ENCODE measurements at regions of chr1 and their contacts with region 1.

Region 1: DNA sequence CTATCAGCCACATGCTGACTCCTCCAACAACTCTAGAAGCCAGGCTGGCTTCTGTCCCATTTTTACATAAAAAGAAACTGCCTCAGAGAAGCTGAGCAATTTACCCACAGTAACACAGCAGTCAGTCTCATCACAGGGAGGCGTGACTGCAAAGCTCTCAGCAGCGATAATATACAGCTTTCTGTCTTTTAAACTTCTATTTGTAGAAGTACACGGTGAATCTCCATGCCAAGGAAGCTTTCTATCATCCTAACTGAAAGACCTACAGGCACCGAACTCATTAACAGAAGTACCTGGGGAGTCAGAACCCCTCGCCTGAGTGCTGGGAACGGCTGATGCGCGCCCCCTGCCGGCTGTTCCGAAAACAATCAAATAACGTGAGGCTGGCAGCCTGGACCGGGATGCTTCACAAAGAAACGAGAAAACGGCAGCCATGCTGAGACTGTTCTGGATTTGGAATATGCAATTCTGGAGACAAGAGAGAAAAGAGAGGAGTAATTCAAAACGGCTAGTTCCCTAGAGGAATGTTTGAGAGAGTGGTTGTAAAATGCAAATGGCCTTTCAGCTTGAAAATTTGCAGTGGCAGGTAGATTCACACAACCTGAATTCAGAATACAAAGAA is 43.5 kb upstream of the RAB4A start:
- DNase-seq: peak; percentile 92

Region 2: DNA sequence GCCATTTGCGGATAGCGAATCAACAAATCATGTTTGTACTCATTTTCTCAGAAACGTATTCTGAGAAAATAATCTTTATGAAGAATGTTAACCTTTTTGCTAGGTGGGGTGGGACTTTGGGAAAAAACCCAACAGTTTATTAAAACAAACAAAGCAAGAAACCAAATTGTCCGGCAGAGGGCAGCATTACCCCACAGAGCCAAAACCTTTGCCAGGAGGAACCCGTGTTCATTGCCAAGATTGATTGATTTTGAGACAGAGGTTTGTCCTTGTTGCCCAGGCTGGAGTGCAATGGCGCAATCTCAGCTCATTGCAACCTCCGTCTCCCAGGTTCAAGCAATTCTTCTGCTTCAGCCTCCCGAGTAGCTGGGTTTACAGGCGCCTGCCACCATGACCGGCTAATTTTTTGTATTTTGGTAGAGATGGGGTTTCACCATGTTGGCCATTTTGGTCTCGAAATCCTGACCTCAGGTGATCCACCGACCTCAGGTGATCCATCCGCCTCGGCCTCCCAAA is 563.0 kb before region 1 on chr1:
- intact Hi-C with region 1: loop called (anchors 2 kb)
- DNase-seq: peak; percentile 87

Region 3: GRCh38 chr1:228691926-228692325 is 535.5 kb before region 1 on chr1:
- intact Hi-C with region 1: loop called (anchors 5 kb)
- DNase-seq: no peak

Region 4: DNA sequence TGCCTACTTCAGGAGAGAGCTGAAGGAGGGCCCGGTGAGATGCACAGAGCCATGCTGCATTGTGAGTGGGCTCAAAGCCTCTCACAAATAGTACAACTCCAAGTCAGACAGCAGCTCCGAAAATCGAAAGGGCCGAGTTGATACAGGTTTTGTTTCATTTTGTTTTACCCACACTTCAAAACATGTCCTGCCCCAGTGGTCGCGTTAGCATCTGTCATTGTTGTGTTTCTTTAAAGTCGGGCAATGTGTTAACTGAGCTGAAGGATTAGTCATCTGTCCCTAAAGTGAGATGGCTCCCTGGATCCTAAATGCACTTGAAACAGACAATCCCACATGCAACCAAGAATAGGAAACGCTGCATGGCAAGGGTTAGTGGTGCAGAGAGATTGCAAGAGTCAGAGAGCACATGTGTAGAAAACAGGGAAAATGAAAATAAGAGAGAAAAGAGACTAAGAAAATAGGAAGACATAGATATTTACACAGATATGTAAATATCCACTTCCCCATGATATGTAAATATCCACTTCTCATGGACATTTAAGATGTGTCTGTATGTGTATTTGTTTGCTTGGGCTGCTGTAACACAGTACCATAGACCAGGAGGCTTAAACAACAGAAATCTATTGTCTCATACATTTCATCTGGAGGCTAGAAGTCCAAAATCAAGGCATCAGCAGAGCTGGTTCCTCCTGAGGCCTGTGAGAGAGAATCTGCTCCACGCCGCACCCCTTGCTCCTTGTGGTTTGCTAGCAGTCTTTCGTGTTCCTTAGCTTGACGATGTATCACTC is 87.9 kb before region 1 on chr1:
- intact Hi-C with region 1: no loop called
- DNase-seq: no peak

Measured in cardiac septum (tissue), 1 donor.